HEK293 (cell line): ENCODE measurements at regions of chr9 and their contacts with region 1.

Region 1: DNA sequence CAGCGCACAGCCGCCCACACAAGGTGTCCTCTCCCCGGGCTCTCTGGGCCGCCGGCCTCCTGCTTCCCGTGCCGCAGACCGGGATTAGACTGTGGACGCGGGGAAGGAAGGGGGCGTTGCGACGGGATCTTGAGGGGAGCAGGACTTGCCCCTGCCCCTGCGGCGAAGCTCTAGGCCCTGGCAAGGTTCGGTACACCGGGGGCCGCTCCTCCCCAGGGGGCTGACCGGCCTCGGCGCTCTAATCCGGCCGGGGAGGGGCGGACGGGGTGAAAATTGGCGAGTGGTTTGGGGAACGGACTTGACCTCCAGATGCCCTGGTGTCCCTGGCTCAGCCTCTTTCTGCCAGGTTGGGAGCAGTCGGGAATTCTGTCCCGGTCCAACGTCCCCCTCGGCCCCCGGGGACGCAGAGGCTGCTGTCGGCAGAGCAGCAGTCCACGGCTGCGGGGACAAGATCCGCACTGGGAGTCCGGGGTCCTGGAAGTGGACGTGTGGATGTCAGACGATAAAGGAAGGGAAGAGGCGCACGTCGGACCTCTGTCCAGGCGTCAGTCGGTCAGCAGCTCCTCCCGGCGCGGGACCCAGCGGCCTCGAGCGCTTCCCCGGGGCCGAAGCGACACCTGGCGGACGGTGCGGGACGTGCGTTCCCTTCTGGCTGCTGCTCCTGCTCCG is 1.9 kb upstream of the CNTFR start:
- H3K4me3 ChIP-seq: no peak overlapping the region
- H3K27ac ChIP-seq: no peak overlapping the region
- H3K4me1 ChIP-seq: no peaks in the 10 kb centered on the region
- CTCF ChIP-seq: peak; percentile 90

Region 2: GRCh38 chr9:34310205-34310604 is 281.2 kb before region 1 on chr9:
- CTCF ChIA-PET with region 1: no interaction called
- POLR2A ChIA-PET with region 1: no interaction called
- H3K4me3 ChIP-seq: no peak overlapping the region
- H3K27ac ChIP-seq: no peak overlapping the region
- H3K4me1 ChIP-seq: peaks cover 8% of the 10 kb centered on the region
- CTCF ChIP-seq: no peak

Region 3: DNA sequence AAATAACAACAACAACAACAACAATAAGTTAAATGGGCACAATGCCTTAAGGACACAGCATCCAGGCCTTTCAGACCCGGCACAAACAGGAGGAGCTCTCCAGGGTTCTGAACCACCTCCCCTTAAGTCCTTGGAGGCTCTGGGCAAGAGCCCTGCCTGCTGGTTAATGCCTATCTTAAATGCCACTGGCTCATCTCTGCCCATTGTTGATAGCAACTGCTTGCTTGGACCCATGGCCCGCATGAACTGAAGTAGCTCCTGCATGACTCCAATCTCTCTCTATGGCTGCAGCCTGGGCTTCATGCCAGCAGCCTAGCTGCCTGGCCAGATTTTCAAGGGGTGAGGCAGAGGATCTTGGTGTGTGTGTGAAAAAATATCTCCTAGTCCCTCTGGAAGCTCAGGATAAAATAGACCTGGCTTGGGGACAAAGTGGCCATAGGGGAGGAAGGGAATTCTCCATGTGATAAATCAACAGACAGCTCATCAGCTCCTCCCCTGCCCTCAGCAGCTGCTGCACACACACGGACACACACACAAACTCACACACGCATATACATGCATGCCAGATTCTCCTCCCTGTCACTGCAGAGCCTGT is 160.4 kb before region 1 on chr9:
- CTCF ChIA-PET with region 1: interaction called, 16 read pairs
- POLR2A ChIA-PET with region 1: no interaction called
- H3K4me3 ChIP-seq: no peak overlapping the region
- H3K27ac ChIP-seq: no peak overlapping the region
- H3K4me1 ChIP-seq: no peaks in the 10 kb centered on the region
- CTCF ChIP-seq: no peak

Region 4: GRCh38 chr9:34500623-34501267 is 90.6 kb before region 1 on chr9:
- CTCF ChIA-PET with region 1: interaction called, 10 read pairs
- POLR2A ChIA-PET with region 1: no interaction called
- H3K4me3 ChIP-seq: no peak overlapping the region
- H3K27ac ChIP-seq: no peak overlapping the region
- H3K4me1 ChIP-seq: no peaks in the 10 kb centered on the region
- CTCF ChIP-seq: peak; percentile 58

Region 5: DNA sequence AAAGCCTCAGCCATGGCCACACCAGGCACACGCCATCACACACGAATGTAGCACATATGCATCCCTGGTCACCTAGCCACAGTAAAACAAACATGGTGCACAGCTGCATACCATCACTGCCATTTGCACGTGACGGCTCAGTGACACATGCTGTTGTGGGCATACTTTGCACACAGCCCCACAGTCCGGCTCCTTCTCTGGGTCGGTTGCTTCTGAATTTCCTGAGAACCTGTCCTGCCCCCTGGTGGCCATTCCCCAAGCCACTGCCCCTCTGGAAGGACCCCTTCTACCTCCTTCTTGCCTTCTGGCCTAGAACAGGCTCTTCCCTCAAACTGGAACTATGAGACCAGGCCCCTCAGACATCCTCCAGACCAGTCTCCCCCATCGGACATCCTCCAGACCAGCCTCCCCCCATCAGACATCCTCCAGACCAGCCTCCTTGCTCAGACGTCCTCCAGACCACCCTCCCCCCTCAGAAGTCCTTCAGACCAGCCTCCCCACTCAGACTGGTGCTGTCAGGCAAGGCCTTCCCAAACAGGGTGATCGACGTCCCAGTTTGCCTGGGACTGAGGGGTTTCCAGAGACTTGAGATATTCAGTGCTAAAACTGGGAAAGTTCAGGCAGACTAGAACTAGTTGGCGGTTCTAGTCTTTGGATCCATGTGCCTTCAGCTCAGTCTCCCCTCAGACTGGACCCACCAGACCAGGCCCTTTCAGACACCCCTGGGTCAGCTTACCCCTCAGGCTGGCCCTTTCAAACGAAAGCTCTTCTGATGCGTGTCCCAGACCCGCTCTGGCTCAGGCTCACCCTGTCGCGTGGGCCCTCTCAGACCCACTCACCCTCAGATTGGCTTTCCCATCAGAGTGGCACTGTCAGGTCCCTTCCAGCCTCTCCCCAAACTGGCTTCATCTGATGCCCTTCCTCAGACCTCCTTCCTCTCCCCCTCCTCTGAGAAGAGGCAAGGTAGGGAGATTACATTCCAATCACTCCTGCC is 44.3 kb before region 1 on chr9:
- CTCF ChIA-PET with region 1: interaction called, 92 read pairs
- POLR2A ChIA-PET with region 1: interaction called, 7 read pairs
- H3K4me3 ChIP-seq: no peak overlapping the region
- H3K27ac ChIP-seq: no peak overlapping the region
- H3K4me1 ChIP-seq: no peaks in the 10 kb centered on the region
- CTCF ChIP-seq: peak; percentile 38; the same call in 1 of the 2 replicates

Region 6: DNA sequence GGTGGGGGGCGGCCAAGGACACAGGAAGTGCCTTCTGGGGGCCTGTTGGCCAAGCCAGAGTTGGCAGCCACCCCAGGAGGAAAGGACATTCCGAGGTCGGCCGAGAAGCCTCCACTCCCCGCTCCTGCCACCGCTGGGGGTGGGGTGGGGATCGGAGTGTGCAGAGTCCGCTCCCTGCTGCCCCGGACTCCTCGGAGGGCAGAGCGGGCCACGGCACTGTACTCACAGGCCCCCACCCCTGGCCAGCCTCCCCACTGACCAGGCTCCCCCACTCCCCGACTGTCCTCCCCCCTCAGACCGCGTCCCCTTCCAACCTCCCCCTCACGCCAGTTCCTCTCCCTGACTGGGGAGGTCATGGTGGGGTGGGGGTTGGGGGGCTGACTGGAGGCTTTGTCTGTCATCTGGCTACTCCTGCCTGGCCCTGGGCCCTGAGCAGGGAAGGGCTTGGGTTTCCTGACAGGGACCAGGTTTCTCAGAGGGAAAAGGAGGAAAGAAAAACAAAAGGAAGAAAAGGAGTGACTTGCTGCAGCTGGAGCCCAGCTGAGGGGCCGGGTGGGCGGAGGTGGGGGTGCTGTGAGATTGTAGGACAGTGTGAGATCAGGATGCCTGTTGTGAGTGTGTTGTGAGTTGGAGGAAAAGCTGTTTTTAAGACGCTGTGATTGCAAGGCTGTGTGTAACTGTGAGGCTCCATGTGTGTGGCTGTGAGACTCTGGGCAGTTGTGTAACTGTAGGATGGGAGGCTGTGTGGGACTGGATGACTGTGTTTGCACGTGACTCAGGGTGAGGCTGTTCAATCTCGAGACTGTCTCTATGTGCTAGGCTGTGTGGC is 31.5 kb before region 1 on chr9:
- CTCF ChIA-PET with region 1: interaction called, 49 read pairs
- POLR2A ChIA-PET with region 1: no interaction called
- H3K4me3 ChIP-seq: no peak overlapping the region
- H3K27ac ChIP-seq: no peak overlapping the region
- H3K4me1 ChIP-seq: peaks cover 1% of the 10 kb centered on the region; the same call in 1 of the 2 replicates
- CTCF ChIP-seq: no peak

Region 7: GRCh38 chr9:34578241-34579103 is 12.9 kb before region 1 on chr9:
- CTCF ChIA-PET with region 1: interaction called, 40 read pairs
- POLR2A ChIA-PET with region 1: interaction called, 3 read pairs
- H3K4me3 ChIP-seq: no peak overlapping the region
- H3K27ac ChIP-seq: no peak overlapping the region
- H3K4me1 ChIP-seq: no peaks in the 10 kb centered on the region
- CTCF ChIP-seq: no peak

Region 8: GRCh38 chr9:34637356-34638137 is 46.2 kb after region 1 on chr9 and contains the start of gene SIGMAR1:
- CTCF ChIA-PET with region 1: interaction called, 13 read pairs
- POLR2A ChIA-PET with region 1: interaction called, 3 read pairs
- H3K4me3 ChIP-seq: peak within 1 kb of the TSS; percentile 67
- H3K27ac ChIP-seq: peak within 1 kb of the TSS; percentile 77
- H3K4me1 ChIP-seq: no peaks in the 10 kb centered on the region
- CTCF ChIP-seq: peak; percentile 20; the same call in 1 of the 2 replicates

Region 9: DNA sequence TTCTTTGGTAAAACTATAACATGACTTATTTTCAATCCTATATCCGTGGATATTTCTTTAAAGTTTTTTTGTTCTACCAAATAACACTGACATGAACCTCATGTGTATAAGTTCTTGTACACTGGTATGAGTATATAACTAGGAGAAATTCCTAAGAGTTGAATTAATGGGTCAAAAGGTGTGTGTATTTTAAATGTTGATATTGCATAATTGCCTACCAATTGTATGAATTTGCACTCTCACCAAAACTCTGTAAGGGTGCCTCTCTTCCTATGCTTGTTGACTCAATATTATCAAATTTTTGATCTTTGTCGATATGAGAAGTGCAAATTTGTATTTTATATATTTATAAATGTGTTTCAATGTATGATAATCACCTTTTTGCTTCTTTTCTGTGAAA is 141.5 kb after region 1 on chr9:
- CTCF ChIA-PET with region 1: no interaction called
- POLR2A ChIA-PET with region 1: no interaction called
- H3K4me3 ChIP-seq: no peak overlapping the region
- H3K27ac ChIP-seq: no peak overlapping the region
- H3K4me1 ChIP-seq: no peaks in the 10 kb centered on the region
- CTCF ChIP-seq: no peak